Adrenal gland (tissue), 19 donors: ENCODE measurements at regions of chr7 and their contacts with region 1.

Region 1: GRCh38 chr7:129825496-129826267 is 127.1 kb downstream of the UBE2H start:
- DNase-seq: peak; percentile 85 to 92 (median 90)
- H3K4me3 ChIP-seq: peak overlapping the region; percentile 17 to 69 (median 54)
- H3K27ac ChIP-seq: peak overlapping the region in 4 of 5 donors; percentile 72 to 89 (median 74)
- H3K4me1 ChIP-seq: peaks cover 9 to 32% of the 10 kb centered on the region in 2 donors
- H3K27me3 ChIP-seq: no peaks in the 10 kb centered on the region
- CTCF ChIP-seq: peak; percentile 53 to 99 (median 63)
- POLR2A ChIP-seq: no peak

Region 2: GRCh38 chr7:129664029-129665012 is 161.4 kb before region 1 on chr7:
- intact Hi-C with region 1: loop called (anchors 5 kb)
- DNase-seq: peak in 1 of 7 donors; percentile 21
- H3K4me3 ChIP-seq: no peak overlapping the region
- H3K27ac ChIP-seq: no peak overlapping the region
- H3K4me1 ChIP-seq: peaks cover 5 to 9% of the 10 kb centered on the region in 2 donors
- H3K27me3 ChIP-seq: no peaks in the 10 kb centered on the region
- CTCF ChIP-seq: peak; percentile 28 to 75 (median 69)
- POLR2A ChIP-seq: no peak

Region 3: GRCh38 chr7:129875745-129876411 is 50.2 kb after region 1 on chr7:
- intact Hi-C with region 1: no loop called
- DNase-seq: no peak
- H3K4me3 ChIP-seq: peak overlapping the region in 1 of 4 donors; percentile 17
- H3K27ac ChIP-seq: peak overlapping the region in 4 of 5 donors; percentile 10 to 68 (median 52)
- H3K4me1 ChIP-seq: peaks cover 25 to 60% of the 10 kb centered on the region in 2 donors
- H3K27me3 ChIP-seq: no peaks in the 10 kb centered on the region
- CTCF ChIP-seq: no peak
- POLR2A ChIP-seq: no peak

Region 4: DNA sequence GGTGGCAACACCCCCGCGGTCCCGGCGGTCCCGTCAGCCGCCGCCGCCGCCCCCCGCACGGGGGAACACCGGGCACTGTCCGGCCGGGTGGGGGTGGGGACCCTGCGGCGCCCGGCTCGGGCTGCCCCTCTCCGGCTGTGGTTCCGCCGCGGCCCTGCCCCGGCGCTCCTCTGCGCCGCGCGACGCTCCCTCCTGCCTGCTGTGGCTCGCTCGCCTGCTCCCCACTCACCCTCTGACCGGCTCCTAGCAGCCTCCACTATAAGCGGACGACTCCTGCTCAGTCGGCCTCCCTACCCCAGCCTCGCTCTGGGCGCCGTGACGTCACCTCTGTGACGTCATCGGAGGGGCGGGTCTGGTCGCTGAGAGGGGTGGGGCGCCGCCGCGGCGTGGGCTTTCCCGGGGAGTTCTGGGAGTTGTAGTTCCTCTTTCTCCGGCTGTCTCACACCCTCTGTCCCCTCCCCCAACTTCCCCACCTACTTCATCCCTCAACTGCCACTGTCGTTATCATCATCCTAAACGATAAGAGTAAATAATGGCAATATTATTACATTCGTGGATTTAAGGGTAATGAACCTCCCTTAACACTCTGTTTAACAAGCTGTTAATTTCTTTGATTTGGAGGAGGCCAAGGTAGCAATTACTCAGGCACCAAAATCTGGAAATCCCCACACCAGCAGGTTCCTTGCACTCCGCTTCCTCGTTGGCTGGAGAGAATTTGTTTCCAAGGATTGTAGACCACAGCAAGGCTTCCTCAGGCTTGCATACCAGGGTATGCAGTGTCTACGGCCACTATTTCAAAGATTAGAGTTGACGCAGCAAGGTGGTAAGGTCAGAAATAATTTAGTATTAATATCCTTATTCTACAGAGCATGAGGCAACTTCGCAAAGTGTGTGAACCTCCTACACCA is 127.2 kb after region 1 on chr7 and contains the start of gene UBE2H:
- intact Hi-C with region 1: loop called (anchors 10 kb)
- DNase-seq: peak; percentile 91 to 96 (median 93)
- H3K4me3 ChIP-seq: peak within 1 kb of the TSS; percentile 80 to 93 (median 88)
- H3K27ac ChIP-seq: peak within 1 kb of the TSS; percentile 78 to 98 (median 98)
- H3K4me1 ChIP-seq: peaks cover 14 to 26% of the 10 kb centered on the region in 2 donors
- H3K27me3 ChIP-seq: no peaks in the 10 kb centered on the region
- CTCF ChIP-seq: peak in 2 of 6 experiments; percentile 13 to 27
- POLR2A ChIP-seq: peak; percentile 92 to 97
- total RNA-seq, gene UBE2H: 61.8 to 392 (median 167) TPM

Region 5: DNA sequence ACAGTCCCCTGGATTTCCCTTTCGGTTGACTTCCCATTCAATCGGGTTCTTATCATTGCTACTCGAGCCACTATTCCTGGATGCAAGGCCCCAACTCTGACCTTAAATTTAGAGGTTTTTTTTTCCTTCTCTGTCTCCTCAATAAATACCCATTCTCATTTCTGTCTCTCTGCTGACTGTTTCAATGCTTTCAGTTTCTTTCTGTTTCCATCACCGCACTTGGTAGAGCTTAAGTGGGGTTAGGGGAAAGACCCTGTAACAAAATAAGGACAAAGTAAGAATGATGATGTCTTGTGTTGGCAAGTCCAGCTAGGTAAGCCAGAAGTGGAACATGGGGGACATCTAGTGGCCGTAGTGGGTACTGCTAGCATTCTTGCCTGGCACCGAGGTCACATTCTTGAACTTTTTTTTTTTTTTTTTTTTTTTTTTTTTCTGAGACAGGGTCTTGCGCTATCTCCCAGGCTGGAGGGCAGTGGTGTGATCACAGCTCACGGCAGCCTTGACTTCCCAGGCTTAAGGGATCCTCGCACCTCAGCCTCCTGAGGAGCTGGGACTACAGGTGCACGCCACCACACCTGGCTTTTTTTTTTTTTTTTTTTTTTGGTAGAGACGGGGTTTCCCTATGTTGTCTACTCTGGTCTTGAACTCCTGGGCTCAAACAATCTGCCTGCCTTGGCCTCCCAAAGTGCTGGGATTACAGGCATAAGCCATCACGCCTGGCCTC is 185.2 kb after region 1 on chr7:
- intact Hi-C with region 1: loop called (anchors 5 kb)
- DNase-seq: peak; percentile 78 to 98 (median 90)
- H3K4me3 ChIP-seq: no peak overlapping the region
- H3K27ac ChIP-seq: peak overlapping the region in 3 of 5 donors; percentile 54 to 87 (median 67)
- H3K4me1 ChIP-seq: peaks cover 8 to 22% of the 10 kb centered on the region in 2 donors
- H3K27me3 ChIP-seq: no peaks in the 10 kb centered on the region
- CTCF ChIP-seq: peak; percentile 84 to 99 (median 98)
- POLR2A ChIP-seq: no peak